MCF 10A (cell line): ENCODE measurements at regions of chr4 and their contacts with region 1.

Region 1: DNA sequence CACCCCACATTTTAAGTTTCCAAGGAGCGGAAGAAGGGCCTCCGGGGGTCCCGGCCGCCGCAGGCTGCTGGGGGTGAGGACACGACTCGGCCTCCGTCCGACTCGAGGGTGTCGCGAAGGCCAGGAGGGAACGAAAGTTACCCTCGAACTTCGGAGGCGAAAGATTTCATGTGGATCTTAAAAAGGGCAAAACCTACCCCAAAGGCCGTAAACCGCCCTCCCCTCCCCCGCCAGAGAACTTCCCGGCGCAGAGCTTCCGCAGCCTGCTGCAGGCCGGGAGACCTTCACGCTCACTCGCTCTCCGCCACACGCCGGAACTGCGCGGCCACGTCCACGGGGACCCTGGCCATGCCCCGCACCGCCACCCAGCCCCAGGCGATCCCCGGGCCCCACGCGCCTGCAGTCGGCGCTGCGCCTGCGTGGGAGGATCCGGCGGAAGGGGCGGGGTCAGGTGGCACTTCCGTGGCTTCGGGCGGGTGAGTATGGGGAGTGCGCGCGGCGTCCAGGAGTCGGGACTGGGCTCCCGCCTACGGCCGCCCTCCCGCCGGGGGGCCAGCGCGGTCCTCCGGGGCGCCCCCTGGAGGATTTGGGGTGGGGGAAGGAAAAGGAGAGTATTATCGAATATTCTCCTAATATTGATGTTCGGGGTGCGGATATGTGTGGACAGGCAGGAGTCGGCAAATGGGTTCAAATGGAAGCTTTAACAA is at the start of gene MMAA:
- DNase-seq: peak; percentile 90
- H3K4me3 Mint-ChIP-seq: peak within 1 kb of the TSS; percentile 95
- H3K27ac Mint-ChIP-seq: peak within 1 kb of the TSS; percentile 99
- H3K4me1 Mint-ChIP-seq: peaks cover 9% of the 10 kb centered on the region
- H3K27me3 Mint-ChIP-seq: no peaks in the 10 kb centered on the region
- CTCF ChIP-seq: peak; percentile 65
- total RNA-seq, gene MMAA: 9.5 and 9.7 TPM in 2 replicates

Region 2: GRCh38 chr4:144872508-144873225 is 746.4 kb before region 1 on chr4:
- CTCF ChIA-PET with region 1: no interaction called
- POLR2A ChIA-PET with region 1: no interaction called
- intact Hi-C with region 1: no loop called
- DNase-seq: no peak
- H3K4me3 Mint-ChIP-seq: no peak overlapping the region
- H3K27ac Mint-ChIP-seq: no peak overlapping the region
- H3K4me1 Mint-ChIP-seq: no peaks in the 10 kb centered on the region
- H3K27me3 Mint-ChIP-seq: no peaks in the 10 kb centered on the region
- CTCF ChIP-seq: no peak

Region 3: GRCh38 chr4:145180298-145181090 is 438.6 kb before region 1 on chr4 and contains the start of gene OTUD4:
- CTCF ChIA-PET with region 1: interaction called, 7 read pairs
- POLR2A ChIA-PET with region 1: interaction called, 19 read pairs
- intact Hi-C with region 1: no loop called
- DNase-seq: peak; percentile 92
- H3K4me3 Mint-ChIP-seq: peak within 1 kb of the TSS; percentile 73
- H3K27ac Mint-ChIP-seq: peak within 1 kb of the TSS; percentile 85
- H3K4me1 Mint-ChIP-seq: peaks cover 9% of the 10 kb centered on the region
- H3K27me3 Mint-ChIP-seq: no peaks in the 10 kb centered on the region
- CTCF ChIP-seq: no peak
- total RNA-seq, gene OTUD4: 66.2 and 68.0 TPM in 2 replicates

Region 4: GRCh38 chr4:145481164-145481941 is 137.7 kb before region 1 on chr4 and contains the start of gene SMAD1:
- CTCF ChIA-PET with region 1: no interaction called
- POLR2A ChIA-PET with region 1: interaction called, 16 read pairs
- intact Hi-C with region 1: no loop called
- DNase-seq: peak; percentile 83
- H3K4me3 Mint-ChIP-seq: no peak within 1 kb of the TSS
- H3K27ac Mint-ChIP-seq: no peak within 1 kb of the TSS
- H3K4me1 Mint-ChIP-seq: peaks cover 12% of the 10 kb centered on the region
- H3K27me3 Mint-ChIP-seq: no peaks in the 10 kb centered on the region
- CTCF ChIP-seq: no peak
- total RNA-seq, gene SMAD1: 23.7 and 27.9 TPM in 2 replicates

Region 5: DNA sequence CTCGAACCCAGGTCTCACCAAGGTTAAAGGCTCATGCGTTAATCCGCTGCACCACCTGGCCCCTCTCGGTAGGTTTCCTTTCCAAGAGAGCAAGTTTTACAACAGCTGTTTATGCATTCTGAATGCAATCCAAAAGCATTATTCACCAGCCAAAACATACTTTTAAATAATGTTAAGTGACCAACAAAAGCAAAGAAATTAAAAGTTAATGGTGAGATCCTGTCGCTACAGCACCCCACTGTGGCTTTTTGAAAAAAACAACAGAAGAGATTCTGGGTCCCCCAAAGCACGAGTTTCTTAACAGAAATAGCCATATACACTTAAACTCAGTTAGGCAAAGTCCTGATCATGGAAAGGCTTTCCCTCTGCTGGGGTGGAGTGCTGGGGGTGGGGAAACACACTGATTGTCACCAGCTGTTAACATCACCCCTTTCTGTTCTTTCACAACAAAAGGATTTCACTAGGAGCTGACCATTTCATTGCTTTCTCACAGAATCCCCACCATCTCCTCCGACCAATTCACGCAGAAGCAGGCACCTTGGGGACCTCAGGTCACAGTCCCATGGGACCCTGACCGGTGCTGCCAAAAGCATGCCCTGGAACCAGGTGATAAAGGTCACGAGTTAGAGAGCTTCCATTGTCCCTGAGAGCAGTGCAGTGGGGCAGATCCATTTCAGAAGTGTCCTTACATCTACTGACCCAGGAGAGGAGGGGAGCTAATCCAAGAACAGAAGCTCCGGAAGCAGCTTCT is 268.3 kb after region 1 on chr4:
- CTCF ChIA-PET with region 1: no interaction called
- POLR2A ChIA-PET with region 1: interaction called, 4 read pairs
- intact Hi-C with region 1: loop called (anchors 5 kb)
- DNase-seq: no peak
- H3K4me3 Mint-ChIP-seq: no peak overlapping the region
- H3K27ac Mint-ChIP-seq: no peak overlapping the region
- H3K4me1 Mint-ChIP-seq: peaks cover 2% of the 10 kb centered on the region
- H3K27me3 Mint-ChIP-seq: no peaks in the 10 kb centered on the region
- CTCF ChIP-seq: no peak

Region 6: DNA sequence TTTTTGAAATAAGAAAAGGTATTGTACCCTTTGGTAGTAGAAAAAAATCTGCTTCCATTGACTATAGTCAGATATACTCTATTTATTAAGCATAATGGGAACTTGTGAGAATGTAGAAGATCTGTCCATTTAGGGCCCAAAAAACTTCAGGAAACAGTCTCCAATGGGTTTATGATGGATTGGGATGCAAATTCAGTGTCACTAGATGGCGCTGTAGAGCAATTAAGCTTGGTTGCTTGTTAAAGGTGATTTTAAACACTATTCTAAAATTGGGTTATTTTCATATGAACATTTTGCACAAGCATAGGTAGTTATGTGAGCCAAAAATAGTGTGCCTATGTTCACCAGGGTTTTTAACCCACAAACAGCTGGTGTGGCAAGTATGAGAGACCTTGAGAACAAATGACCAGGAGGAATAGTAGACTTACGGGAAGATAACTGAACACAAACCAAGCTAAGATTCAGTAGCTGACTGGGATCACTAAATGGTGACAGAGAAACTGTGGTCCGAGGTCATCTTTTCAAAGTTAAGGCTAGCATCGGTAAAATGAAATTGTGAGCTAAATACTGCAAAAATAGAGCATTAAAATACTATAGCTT is 476.1 kb after region 1 on chr4:
- CTCF ChIA-PET with region 1: no interaction called
- POLR2A ChIA-PET with region 1: no interaction called
- intact Hi-C with region 1: no loop called
- DNase-seq: peak; percentile 79
- H3K4me3 Mint-ChIP-seq: no peak overlapping the region
- H3K27ac Mint-ChIP-seq: no peak overlapping the region
- H3K4me1 Mint-ChIP-seq: no peaks in the 10 kb centered on the region
- H3K27me3 Mint-ChIP-seq: no peaks in the 10 kb centered on the region
- CTCF ChIP-seq: peak; percentile 72

Region 7: GRCh38 chr4:146333187-146333894 is 714.3 kb after region 1 on chr4:
- CTCF ChIA-PET with region 1: no interaction called
- POLR2A ChIA-PET with region 1: interaction called, 3 read pairs
- intact Hi-C with region 1: loop called (anchors 10 kb)
- DNase-seq: peak; percentile 86
- H3K4me3 Mint-ChIP-seq: no peak overlapping the region
- H3K27ac Mint-ChIP-seq: no peak overlapping the region
- H3K4me1 Mint-ChIP-seq: peaks cover 22% of the 10 kb centered on the region
- H3K27me3 Mint-ChIP-seq: no peaks in the 10 kb centered on the region
- CTCF ChIP-seq: no peak